ENCODE measurements at regions of chr16 and their contacts with region 1.

Region 1: GRCh38 chr16:87203060-87203656 is 114.0 kb downstream of the C16orf95 start:
- DNase-seq: peak; percentile 42
- H3K4me3 ChIP-seq: no peak overlapping the region
- H3K27ac ChIP-seq: peak overlapping the region; percentile 71
- H3K27me3 ChIP-seq: no peaks in the 10 kb centered on the region
- CTCF ChIP-seq: peak; percentile 97

Region 2: DNA sequence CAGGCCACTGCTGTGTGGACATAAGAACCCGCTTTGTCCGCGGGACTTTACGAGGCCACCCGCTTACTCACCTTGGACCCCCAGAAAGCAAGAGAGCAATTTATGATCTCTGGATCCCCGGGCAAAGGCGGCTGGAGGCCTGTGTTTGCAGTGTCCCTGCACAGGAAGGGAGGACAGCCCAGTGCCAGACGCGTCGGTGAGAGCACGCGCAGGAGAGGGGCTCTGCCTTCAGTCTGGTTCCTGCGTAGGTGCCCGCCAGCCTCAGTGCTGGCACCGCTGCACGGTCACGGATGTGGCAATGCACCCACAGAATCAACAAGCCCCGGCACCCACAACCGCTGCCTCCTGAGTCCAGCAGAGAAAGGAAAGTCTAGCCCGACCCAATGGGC is 134.4 kb before region 1 on chr16:
- CTCF ChIA-PET with region 1: no interaction called
- POLR2A ChIA-PET with region 1: no interaction called
- DNase-seq: no peak
- H3K4me3 ChIP-seq: no peak overlapping the region
- H3K27ac ChIP-seq: no peak overlapping the region
- H3K27me3 ChIP-seq: peaks cover 28% of the 10 kb centered on the region
- CTCF ChIP-seq: no peak

Region 3: DNA sequence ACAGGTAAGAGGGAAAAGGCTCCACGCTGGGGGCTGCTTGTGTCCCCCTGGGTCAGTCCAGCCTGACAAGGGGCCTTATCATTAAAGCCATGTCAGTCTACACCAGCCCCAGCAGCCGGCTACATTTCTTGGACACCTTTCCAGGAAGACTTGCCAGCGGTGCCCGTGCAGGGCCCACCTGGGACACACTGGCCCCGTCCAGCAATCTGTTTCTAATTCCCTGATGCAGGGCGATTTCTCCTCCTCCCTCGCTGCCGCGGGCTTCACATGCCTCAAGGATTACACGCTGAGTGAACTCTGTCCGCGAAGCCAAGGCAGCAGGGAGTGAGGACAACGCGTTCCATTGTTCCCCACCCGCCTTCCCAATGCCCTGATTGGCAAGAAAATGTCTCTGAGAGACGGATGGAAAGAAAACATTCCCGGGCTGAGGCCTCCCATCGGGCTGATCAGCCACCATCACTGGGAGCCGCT is 70.6 kb before region 1 on chr16:
- CTCF ChIA-PET with region 1: no interaction called
- POLR2A ChIA-PET with region 1: no interaction called
- DNase-seq: peak; percentile 8
- H3K4me3 ChIP-seq: no peak overlapping the region
- H3K27ac ChIP-seq: no peak overlapping the region
- H3K27me3 ChIP-seq: peaks cover 34% of the 10 kb centered on the region
- CTCF ChIP-seq: no peak

Region 4: DNA sequence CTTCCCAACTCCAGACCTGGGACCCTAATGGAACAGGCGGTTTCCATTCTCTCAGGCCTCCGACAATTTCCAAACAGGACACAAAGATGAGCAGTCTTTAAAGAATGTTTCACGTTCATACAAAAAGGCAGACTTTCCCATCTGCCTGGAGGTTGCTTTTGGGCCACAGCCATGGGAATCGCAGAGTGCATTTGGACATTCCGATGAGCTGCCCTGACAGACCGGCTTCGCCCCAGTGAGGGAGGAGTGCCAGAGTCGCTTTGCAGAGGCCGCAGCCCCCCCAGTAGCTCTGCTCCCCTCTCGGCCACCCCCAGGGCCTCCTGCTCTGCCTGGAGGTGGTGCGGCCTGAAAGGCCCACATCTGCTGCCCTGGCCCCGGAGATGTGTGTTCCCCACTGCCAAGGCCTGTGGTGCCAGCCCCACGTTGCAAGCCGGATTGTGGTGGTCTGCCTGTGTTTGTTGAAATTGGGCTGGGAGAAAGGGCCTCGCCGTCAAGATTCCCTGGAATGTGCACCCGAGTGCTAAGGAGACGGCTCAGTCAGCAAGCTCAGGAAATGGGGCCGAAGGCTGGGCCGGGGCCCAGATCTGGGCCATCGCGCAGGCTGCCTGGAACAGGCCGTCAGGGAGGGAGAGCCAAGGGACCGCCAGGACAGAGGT is 24.3 kb after region 1 on chr16:
- CTCF ChIA-PET with region 1: interaction called, 6 read pairs
- POLR2A ChIA-PET with region 1: interaction called, 13 read pairs
- DNase-seq: peak; percentile 82
- H3K4me3 ChIP-seq: no peak overlapping the region
- H3K27ac ChIP-seq: peak overlapping the region; percentile 88
- H3K27me3 ChIP-seq: peaks cover 4% of the 10 kb centered on the region
- CTCF ChIP-seq: no peak

Region 5: DNA sequence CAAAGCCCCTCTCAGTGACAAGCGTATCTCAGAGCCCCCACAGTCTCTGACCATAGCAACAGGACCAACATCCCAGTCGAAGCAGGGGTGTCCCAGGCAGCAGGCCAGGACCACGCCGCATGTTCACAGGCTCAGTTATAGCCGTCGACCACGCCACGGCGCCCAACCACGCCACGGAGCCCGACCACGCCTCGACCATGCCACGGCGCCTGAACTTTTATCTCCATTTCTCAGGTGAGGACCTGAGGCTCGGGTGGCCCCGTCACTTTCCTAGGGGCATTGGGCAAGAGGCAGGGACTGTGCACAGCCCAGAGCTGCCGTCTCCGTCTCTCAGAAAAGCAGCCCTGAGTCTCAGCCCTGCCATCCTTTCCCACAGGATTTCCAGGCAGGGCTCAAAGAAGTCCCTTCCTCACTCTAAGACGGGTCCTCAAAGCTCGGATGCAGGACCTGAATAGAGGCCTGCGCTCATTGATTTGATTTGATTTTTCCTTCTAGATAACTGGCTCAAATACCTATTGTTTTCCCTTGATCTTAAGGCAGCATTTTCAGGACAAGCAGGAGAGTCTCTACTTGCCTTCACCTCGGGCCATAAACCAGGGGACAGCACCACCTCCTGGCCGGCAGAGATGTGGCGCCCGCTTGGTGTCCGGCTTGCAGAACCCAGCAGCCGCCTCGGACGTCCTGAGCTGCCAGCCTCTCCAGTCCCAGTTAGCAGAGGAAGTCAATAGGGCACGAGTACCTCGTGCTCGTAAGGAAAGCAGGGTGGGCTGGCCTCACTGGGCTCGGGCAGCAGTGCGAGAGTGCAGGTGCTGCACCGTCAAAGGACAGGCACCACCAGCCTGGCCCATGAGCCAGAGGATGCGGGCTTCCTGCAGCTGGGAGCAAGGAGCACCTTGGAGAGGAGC is 75.3 kb after region 1 on chr16:
- CTCF ChIA-PET with region 1: interaction called, 15 read pairs
- POLR2A ChIA-PET with region 1: no interaction called
- DNase-seq: peak; percentile 68
- H3K4me3 ChIP-seq: no peak overlapping the region
- H3K27ac ChIP-seq: no peak overlapping the region
- H3K27me3 ChIP-seq: no peaks in the 10 kb centered on the region
- CTCF ChIP-seq: peak; percentile 96

Region 6: DNA sequence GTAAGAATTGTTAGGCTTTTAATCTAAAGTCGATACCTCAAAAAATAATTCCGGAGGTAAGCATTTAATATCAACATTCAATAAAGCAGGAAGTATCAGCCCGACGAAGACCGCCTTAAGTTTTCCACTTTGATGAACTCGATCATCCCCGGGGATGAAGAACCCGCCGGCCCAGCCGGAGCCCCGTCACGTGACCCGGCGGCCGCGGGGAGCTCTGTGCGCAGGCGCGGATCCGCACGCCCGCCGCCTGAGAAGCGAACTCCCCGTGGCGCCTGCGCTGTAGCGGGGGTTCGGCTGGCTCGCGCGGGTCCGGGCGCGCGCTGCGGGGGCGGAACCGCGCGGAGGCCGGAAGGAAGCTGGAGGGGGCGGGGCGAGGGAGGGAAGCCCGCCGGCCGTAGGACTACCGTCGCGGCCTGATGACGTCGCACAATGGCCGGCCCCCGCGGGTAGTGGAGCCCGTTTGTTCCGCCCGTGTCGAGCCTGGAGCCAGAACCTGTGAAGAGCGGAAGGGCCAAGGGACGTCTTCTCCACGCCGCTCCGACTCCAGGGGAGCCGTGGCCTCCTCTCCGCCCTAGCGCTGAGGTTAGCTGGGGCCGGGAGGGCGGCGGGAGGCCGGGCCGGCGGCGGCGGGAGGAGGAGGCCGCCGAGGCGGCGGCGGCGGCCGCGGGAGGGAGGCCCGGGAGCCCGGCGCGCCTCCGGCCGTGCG is 1367.0 kb after region 1 on chr16 and contains the start of gene ZC3H18:
- CTCF ChIA-PET with region 1: no interaction called
- POLR2A ChIA-PET with region 1: interaction called, 10 read pairs
- DNase-seq: peak; percentile 82
- H3K4me3 ChIP-seq: peak within 1 kb of the TSS; percentile 83
- H3K27ac ChIP-seq: peak within 1 kb of the TSS; percentile 57
- H3K27me3 ChIP-seq: no peaks in the 10 kb centered on the region
- CTCF ChIP-seq: no peak
- polyA plus RNA-seq, gene ZC3H18: 8.5 and 10.1 TPM in 2 replicates